ENCODE measurements at regions of chr2 and their contacts with region 1.

Region 1: DNA sequence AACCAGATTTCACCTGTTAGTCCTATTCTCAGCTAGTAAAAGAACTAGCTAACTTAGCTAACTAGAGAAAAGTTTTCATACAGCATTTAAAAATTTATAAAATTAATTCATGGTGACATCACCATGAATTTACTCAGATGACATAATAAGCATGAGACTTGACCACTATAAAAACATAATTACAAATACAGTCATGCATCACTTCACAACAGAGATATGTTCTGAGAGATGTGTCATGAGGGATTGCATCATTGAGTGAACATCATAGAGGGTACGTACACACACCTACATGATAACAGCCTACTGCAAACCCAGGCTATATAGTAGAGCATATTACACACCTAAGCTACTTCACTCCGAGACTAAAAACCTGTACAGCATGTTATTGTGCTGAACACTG is 481.3 kb upstream of the CHAC2 start:
- DNase-seq: no peak
- ATAC-seq: no peak
- H3K4me3 ChIP-seq: no peak overlapping the region
- H3K4me3 Mint-ChIP-seq: no peak overlapping the region
- H3K27ac ChIP-seq: no peak overlapping the region
- H3K27ac Mint-ChIP-seq: no peak overlapping the region
- H3K4me1 ChIP-seq: no peaks in the 10 kb centered on the region
- H3K4me1 Mint-ChIP-seq: no peaks in the 10 kb centered on the region
- H3K27me3 ChIP-seq: no peaks in the 10 kb centered on the region
- H3K27me3 Mint-ChIP-seq: no peaks in the 10 kb centered on the region
- CTCF ChIP-seq: no peak

Region 2: GRCh38 chr2:53243430-53243829 is 42.9 kb before region 1 on chr2:
- CTCF ChIA-PET with region 1: no interaction called
- POLR2A ChIA-PET with region 1: no interaction called
- intact Hi-C with region 1: loop called in 1 of 2 experiments (anchors 1 kb)
- DNase-seq: no peak
- ATAC-seq: no peak
- H3K4me3 ChIP-seq: no peak overlapping the region
- H3K4me3 Mint-ChIP-seq: no peak overlapping the region
- H3K27ac ChIP-seq: no peak overlapping the region
- H3K27ac Mint-ChIP-seq: no peak overlapping the region
- H3K4me1 ChIP-seq: no peaks in the 10 kb centered on the region
- H3K4me1 Mint-ChIP-seq: no peaks in the 10 kb centered on the region
- H3K27me3 ChIP-seq: no peaks in the 10 kb centered on the region
- H3K27me3 Mint-ChIP-seq: no peaks in the 10 kb centered on the region
- CTCF ChIP-seq: no peak

Region 3: GRCh38 chr2:53303012-53303578 is 16.8 kb after region 1 on chr2:
- CTCF ChIA-PET with region 1: no interaction called
- POLR2A ChIA-PET with region 1: no interaction called
- intact Hi-C with region 1: no loop called
- DNase-seq: no peak
- ATAC-seq: no peak
- H3K4me3 ChIP-seq: no peak overlapping the region
- H3K4me3 Mint-ChIP-seq: no peak overlapping the region
- H3K27ac ChIP-seq: no peak overlapping the region
- H3K27ac Mint-ChIP-seq: no peak overlapping the region
- H3K4me1 ChIP-seq: no peaks in the 10 kb centered on the region
- H3K4me1 Mint-ChIP-seq: no peaks in the 10 kb centered on the region
- H3K27me3 ChIP-seq: no peaks in the 10 kb centered on the region
- H3K27me3 Mint-ChIP-seq: no peaks in the 10 kb centered on the region
- CTCF ChIP-seq: no peak